ENCODE measurements at regions of chr15 and their contacts with region 1.

Region 1: DNA sequence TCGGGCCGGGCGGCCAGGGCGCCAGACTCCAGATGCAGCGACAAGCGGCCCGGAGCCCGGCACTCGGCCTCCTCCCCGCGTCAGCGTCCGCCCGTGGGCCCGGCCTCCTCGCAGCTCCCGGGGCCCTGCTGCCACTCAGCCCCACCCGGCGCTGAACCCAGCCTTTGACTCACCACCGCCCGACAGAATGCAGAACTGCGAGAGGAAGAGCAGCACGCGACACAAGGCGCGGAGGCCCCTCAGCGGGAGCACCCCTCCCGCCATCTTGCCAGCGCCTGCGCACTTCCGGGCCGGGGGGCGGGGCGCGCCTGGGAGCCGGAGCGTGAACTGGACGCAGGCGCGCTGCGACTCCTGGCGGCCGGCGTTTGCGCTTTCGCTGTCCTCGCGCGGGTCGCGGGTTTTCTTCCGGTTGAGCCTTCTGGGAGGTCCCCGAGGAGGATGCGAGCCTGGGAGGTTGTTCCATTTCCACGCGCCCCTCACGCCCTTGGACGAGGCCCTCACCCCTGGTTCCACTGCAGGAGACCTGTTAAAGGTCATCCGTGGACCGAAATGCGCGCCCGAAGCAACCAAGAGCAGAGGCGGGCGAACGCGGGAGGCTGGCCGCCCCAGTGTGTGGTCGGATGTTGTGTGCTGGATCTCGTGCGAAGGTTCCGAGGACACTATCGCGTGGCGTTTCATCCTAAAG is at the start of gene TM2D3:
- DNase-seq: peak; percentile 80
- ATAC-seq: peak; percentile 95
- H3K4me3 ChIP-seq: peak within 1 kb of the TSS; percentile 72 to 91 (median 80)
- H3K27ac ChIP-seq: peak within 1 kb of the TSS; percentile 80
- H3K4me1 ChIP-seq: peaks cover 35% of the 10 kb centered on the region
- H3K27me3 ChIP-seq: no peaks in the 10 kb centered on the region; a peak in 1 of 5 replicates
- CTCF ChIP-seq: peak; percentile 91
- EP300 ChIP-seq: peak in 1 of 2 experiments; percentile 13; a peak in 1 of 4 replicates
- POLR2A ChIP-seq: peak; percentile 82 to 94
- RAD21 ChIP-seq: peak; percentile 88
- total RNA-seq, gene TM2D3: 17.8 and 31.1 TPM in 2 replicates

Region 2: DNA sequence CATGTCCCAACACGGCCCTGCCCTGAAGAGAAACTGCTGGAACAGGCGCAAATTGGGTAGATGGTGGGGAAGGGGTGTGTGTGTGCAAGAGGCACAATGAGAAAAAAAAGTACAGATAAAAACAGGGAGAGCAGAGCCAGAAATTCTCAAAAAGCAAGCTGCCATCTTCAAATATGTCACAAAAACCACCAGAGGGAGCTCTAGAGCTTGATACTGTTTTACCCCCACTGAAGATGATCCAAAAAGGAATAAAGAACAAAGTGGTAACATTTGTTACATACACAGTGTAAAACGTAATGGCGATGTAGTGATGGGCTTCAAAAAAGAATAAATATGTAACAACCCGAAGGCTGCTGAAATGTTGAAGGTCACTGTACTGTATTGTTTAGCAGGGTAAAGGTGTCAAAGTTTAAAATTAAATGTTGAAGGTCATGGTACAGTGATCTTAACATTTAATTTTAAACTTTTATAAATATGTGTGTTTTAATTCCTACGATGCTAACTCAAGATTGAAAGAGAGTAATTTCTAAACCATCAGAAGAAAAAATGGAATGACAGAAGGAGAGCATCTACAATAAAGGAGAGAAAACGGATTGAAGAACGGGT is 363.2 kb before region 1 on chr15:
- CTCF ChIA-PET with region 1: interaction called, 3 read pairs
- POLR2A ChIA-PET with region 1: no interaction called
- in situ Hi-C with region 1: loop called (anchors 5 kb)
- intact Hi-C with region 1: loop called (anchors 5 kb)
- DNase-seq: peak; percentile 50
- ATAC-seq: peak; percentile 62
- H3K4me3 ChIP-seq: no peak overlapping the region
- H3K27ac ChIP-seq: no peak overlapping the region
- H3K4me1 ChIP-seq: peaks cover 22% of the 10 kb centered on the region
- H3K27me3 ChIP-seq: no peaks in the 10 kb centered on the region; a peak in 1 of 5 replicates
- CTCF ChIP-seq: peak; percentile 61
- EP300 ChIP-seq: no peak
- POLR2A ChIP-seq: no peak
- RAD21 ChIP-seq: 0 out of 2 replicates have a peak, but pooled peaks have one; percentile 24

Region 3: DNA sequence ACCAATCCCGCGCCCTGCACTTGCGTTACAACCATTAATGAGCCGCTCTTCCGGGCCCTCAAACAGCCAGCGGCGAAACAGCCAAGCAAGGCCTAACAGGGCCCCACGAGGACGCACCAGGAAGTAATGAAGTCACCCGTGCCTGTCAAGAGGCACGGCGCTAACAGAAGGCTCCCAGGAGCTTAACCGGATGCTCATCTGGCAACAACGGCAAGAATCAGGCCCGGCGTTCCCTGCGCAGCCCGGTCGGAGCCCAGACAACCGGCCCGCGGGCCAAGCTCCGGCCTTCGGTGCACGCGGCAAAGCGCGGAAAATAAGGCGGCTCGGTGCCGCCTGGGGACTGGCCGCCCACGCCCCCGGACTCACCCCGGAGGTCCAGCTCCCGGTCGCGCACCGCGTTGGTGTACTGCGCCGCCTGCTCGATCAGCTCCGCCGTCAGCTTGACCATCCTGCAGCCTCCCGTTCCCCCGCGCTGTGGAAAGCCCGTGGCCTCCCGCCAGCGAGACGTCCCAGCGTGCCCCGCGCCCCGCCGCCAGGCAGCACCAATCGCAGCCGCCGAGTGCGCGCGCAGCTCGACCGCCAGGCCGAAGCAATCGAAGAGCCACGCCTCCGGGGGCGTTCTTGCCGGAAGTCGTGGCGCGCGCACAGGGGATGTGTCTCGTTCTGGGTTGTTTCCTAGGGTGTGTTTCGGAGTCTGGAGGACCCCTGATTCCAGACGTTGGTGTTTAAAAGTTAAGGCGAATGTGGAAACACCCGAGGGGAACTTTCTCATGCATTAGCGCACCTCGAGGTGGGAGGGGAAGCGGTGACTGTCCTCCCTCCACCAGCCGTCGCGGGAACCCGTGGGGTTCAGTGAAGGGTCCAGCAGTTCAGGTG is 357.3 kb before region 1 on chr15 and contains the start of gene SNRPA1:
- CTCF ChIA-PET with region 1: no interaction called
- POLR2A ChIA-PET with region 1: no interaction called
- in situ Hi-C with region 1: no loop called
- intact Hi-C with region 1: loop called (anchors 5 kb)
- DNase-seq: peak; percentile 84
- ATAC-seq: peak; percentile 85
- H3K4me3 ChIP-seq: peak within 1 kb of the TSS; percentile 66 to 90 (median 77)
- H3K27ac ChIP-seq: peak within 1 kb of the TSS; percentile 85
- H3K4me1 ChIP-seq: peaks cover 34% of the 10 kb centered on the region
- H3K27me3 ChIP-seq: no peaks in the 10 kb centered on the region; a peak in 1 of 5 replicates
- CTCF ChIP-seq: no peak
- EP300 ChIP-seq: peak in 1 of 2 experiments; percentile 59; a peak in 1 of 4 replicates
- POLR2A ChIP-seq: peak; percentile 79 to 81
- RAD21 ChIP-seq: no peak
- total RNA-seq, gene SNRPA1: 41.2 and 72.5 TPM in 2 replicates

Region 4: GRCh38 chr15:101520395-101520794 is 131.8 kb before region 1 on chr15:
- CTCF ChIA-PET with region 1: no interaction called
- POLR2A ChIA-PET with region 1: no interaction called
- in situ Hi-C with region 1: no loop called
- intact Hi-C with region 1: no loop called
- DNase-seq: no peak
- ATAC-seq: no peak
- H3K4me3 ChIP-seq: no peak overlapping the region
- H3K27ac ChIP-seq: no peak overlapping the region
- H3K4me1 ChIP-seq: peaks cover 45% of the 10 kb centered on the region
- H3K27me3 ChIP-seq: no peaks in the 10 kb centered on the region
- CTCF ChIP-seq: no peak
- EP300 ChIP-seq: no peak
- POLR2A ChIP-seq: no peak
- RAD21 ChIP-seq: no peak

Region 5: DNA sequence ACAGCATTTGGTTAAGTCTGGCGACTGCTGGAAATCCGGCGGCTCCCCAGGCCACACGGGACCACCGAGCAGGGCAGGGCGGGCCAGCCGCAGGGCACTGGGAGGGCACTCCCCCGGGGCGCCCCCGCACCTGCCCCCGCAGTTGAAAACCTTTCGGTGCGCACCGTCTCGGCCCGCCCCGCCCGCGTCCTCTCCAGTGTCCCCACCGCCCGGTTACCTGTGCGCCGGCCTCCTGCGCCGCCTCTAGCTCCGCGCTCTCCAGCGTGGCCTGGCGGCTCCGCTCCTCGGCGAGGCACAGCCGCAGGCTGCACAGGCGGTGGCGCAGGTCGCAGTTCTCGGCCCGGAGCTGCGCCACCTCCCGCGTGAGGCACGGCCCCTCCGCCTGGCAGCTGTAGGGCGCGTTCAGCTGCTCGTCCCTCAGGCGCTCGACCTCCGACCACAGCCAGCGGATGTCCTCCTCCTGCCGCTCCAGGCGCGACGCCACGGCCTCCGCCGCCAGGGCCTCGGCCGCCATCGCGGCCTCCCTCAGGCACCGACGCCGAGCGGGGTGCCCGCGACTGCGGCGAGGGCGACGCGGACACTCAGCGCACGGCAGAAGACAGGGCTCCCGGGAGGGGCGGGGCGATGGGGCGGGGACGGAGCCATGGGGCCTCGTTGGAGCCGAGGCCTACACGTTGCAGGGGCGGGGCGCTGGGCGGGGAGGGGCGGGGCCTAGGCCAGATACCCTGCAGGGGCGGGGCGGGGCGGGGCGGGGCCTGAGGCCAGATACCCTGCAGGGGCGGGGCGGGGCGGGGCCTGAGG is 71.8 kb after region 1 on chr15 and contains the start of gene TARS3:
- CTCF ChIA-PET with region 1: no interaction called
- POLR2A ChIA-PET with region 1: no interaction called
- in situ Hi-C with region 1: no loop called
- intact Hi-C with region 1: loop called (anchors 2 kb)
- DNase-seq: peak; percentile 82
- ATAC-seq: peak; percentile 97
- H3K4me3 ChIP-seq: peak within 1 kb of the TSS; percentile 80 to 88 (median 86)
- H3K27ac ChIP-seq: peak within 1 kb of the TSS; percentile 93
- H3K4me1 ChIP-seq: peaks cover 21% of the 10 kb centered on the region
- H3K27me3 ChIP-seq: no peaks in the 10 kb centered on the region
- CTCF ChIP-seq: peak; percentile 58
- EP300 ChIP-seq: no peak
- POLR2A ChIP-seq: peak; percentile 95 to 96
- RAD21 ChIP-seq: peak; percentile 71
- total RNA-seq, gene TARS3: 11.7 and 13.9 TPM in 2 replicates

Measured in HepG2 (cell line).